ENCODE measurements at regions of chr11 and their contacts with region 1.

Region 1: DNA sequence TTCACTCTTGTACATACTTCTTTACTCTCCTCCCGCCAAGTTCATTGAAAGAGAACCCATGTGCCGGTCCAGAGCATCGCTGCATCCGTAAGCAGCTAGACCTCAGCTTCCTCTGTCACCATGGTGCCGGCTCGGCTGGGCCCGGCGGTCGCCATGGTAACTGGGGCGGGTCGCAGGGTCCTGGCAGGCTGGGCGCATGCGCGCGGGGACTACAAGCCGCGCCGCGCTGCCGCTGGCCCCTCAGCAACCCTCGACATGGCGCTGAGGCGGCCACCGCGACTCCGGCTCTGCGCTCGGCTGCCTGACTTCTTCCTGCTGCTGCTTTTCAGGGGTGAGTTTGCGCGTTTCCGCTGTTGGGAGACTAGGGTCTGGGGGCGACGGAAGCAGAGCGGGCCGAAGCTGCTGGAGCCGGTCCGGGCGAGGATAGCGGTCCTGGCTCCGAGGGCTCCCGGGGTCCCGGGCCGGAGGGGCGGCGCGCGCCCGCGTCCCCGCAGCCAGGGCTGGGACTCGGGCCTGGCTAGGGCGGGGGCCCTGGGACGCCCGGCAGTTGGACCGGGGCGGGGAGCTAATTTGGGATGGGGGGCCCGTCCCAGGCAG is at the start of gene JAM3:
- DNase-seq: peak; percentile 72
- H3K4me3 ChIP-seq: peak within 1 kb of the TSS; percentile 23 to 69 (median 60)
- H3K27ac ChIP-seq: no peak within 1 kb of the TSS
- H3K4me1 ChIP-seq: peaks cover 2% of the 10 kb centered on the region
- H3K27me3 ChIP-seq: peaks cover 5% of the 10 kb centered on the region
- CTCF ChIP-seq: no peak
- total RNA-seq, gene JAM3: 19.8 to 40.7 TPM

Region 2: GRCh38 chr11:134120143-134120850 is 51.4 kb after region 1 on chr11:
- CTCF ChIA-PET with region 1: no interaction called
- dilution Hi-C with region 1: no loop called
- in situ Hi-C with region 1: no loop called
- intact Hi-C with region 1: loop called (anchors 2 kb)
- DNase-seq: peak; percentile 85
- H3K4me3 ChIP-seq: peak overlapping the region; percentile 2 to 21 (median 13)
- H3K27ac ChIP-seq: peak overlapping the region; percentile 76
- H3K4me1 ChIP-seq: peaks cover 40% of the 10 kb centered on the region
- H3K27me3 ChIP-seq: no peaks in the 10 kb centered on the region
- CTCF ChIP-seq: no peak

Region 3: DNA sequence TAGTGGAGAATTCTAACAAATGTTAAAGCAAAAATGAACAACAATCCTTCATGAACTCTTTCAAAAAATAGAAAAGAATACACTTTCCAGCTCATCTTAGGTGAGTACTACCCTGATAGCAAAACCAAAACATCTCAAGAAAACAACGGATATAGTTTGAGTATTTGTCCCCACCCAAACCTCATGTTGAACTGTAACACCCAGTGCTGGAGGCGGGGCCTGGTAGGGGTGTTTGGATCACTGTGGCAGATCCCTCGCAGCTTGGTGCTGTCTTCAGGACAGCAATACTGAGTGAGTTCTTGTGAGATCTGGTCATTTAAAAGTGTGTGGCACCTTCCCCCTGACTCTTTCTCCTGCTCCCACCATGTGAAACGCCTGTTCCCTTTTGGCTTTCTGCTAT is 127.8 kb after region 1 on chr11:
- CTCF ChIA-PET with region 1: no interaction called
- dilution Hi-C with region 1: no loop called
- in situ Hi-C with region 1: no loop called
- intact Hi-C with region 1: no loop called
- DNase-seq: no peak
- H3K4me3 ChIP-seq: no peak overlapping the region
- H3K27ac ChIP-seq: no peak overlapping the region
- H3K4me1 ChIP-seq: no peaks in the 10 kb centered on the region
- H3K27me3 ChIP-seq: no peaks in the 10 kb centered on the region
- CTCF ChIP-seq: no peak